Endothelial cell of umbilical vein (primary cell): ENCODE measurements at regions of chr16 and their contacts with region 1.

Region 1: GRCh38 chr16:15865742-15866141 is 8.9 kb upstream of the MYH11 start:
- DNase-seq: no peak
- H3K4me3 ChIP-seq: no peak overlapping the region
- H3K27ac ChIP-seq: no peak overlapping the region
- H3K4me1 ChIP-seq: no peaks in the 10 kb centered on the region
- H3K27me3 ChIP-seq: no peaks in the 10 kb centered on the region
- CTCF ChIP-seq: no peak
- POLR2A ChIP-seq: no peak

Region 2: GRCh38 chr16:15732416-15732815 is 133.3 kb before region 1 on chr16:
- CTCF ChIA-PET with region 1: no interaction called
- POLR2A ChIA-PET with region 1: interaction called, 16 read pairs
- dilution Hi-C with region 1: no loop called
- intact Hi-C with region 1: no loop called
- DNase-seq: no peak
- H3K4me3 ChIP-seq: no peak overlapping the region
- H3K27ac ChIP-seq: no peak overlapping the region
- H3K4me1 ChIP-seq: no peaks in the 10 kb centered on the region
- H3K27me3 ChIP-seq: no peaks in the 10 kb centered on the region
- CTCF ChIP-seq: no peak
- POLR2A ChIP-seq: no peak

Region 3: DNA sequence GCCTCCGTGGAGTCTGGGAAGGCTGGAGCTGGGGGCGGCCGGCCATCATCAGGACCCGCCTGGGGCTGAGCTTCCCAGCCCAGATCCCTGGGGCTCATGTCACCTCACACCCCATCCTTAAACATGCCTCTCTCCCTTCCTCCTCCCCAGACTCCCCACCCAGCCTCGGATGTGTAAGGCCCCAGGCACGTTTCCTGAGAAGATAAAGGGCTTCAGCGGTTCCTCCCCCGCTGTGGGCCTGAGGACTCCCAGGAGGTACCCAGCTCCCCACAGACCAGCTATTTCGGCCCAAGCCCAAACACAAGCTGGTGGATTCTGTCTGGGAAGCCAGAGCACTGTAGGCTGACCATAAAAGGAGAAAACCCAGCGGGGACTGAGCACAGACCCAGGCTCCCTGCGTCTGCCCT is 58.1 kb before region 1 on chr16:
- CTCF ChIA-PET with region 1: no interaction called
- POLR2A ChIA-PET with region 1: no interaction called
- dilution Hi-C with region 1: no loop called
- intact Hi-C with region 1: no loop called
- DNase-seq: no peak
- H3K4me3 ChIP-seq: no peak overlapping the region
- H3K27ac ChIP-seq: no peak overlapping the region
- H3K4me1 ChIP-seq: no peaks in the 10 kb centered on the region
- H3K27me3 ChIP-seq: peaks cover 7 to 17% of the 10 kb centered on the region in 2 experiments
- CTCF ChIP-seq: no peak
- POLR2A ChIP-seq: no peak